ENCODE measurements at regions of chr20 and their contacts with region 1.

Region 1: GRCh38 chr20:11204926-11205768 is 531.3 kb upstream of the JAG1 start:
- DNase-seq: peak; percentile 66
- H3K4me3 Mint-ChIP-seq: no peak overlapping the region
- H3K27ac Mint-ChIP-seq: peak overlapping the region; percentile 45
- H3K4me1 Mint-ChIP-seq: peaks cover 28% of the 10 kb centered on the region
- H3K27me3 Mint-ChIP-seq: no peaks in the 10 kb centered on the region
- CTCF ChIP-seq: peak; percentile 40

Region 2: DNA sequence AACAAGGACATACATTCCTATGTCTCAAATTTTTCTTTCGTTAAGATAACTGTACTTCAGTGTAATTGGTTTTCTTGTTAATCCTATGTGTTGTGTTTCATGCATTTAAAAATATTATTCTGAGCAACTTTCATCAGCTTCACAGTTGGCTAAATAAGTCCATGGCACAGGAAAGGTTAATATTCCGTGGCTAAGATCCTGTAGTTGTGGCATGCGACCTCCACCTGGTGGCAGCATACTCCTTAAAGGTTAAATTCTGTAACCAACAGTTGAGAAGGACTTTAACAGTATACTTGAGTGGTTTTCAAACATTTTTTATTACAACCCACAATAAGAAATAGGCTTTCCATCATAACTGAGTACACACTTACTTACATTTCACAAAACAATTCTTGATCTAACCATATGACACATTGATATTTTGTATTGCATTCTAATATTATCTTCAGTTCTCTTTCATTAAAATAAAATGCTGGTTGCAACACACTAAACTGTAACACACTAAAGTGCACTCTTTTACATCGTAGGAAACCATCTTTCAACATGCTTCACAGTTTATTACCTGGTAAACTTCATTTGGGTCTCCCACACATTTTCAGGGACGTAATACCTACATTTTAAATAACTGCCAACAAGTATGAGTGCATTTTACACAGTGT is 651.7 kb before region 1 on chr20:
- CTCF ChIA-PET with region 1: interaction called, 4 read pairs
- intact Hi-C with region 1: loop called (anchors 2 kb)
- DNase-seq: peak; percentile 63
- H3K4me3 Mint-ChIP-seq: no peak overlapping the region
- H3K27ac Mint-ChIP-seq: no peak overlapping the region
- H3K4me1 Mint-ChIP-seq: peaks cover 46% of the 10 kb centered on the region
- H3K27me3 Mint-ChIP-seq: no peaks in the 10 kb centered on the region
- CTCF ChIP-seq: peak; percentile 40

Region 3: GRCh38 chr20:10708351-10709185 is 496.6 kb before region 1 on chr20:
- CTCF ChIA-PET with region 1: no interaction called
- intact Hi-C with region 1: loop called (anchors 5 kb)
- DNase-seq: no peak
- H3K4me3 Mint-ChIP-seq: peak overlapping the region; percentile 43
- H3K27ac Mint-ChIP-seq: peak overlapping the region; percentile 96
- H3K4me1 Mint-ChIP-seq: peaks cover 53% of the 10 kb centered on the region
- H3K27me3 Mint-ChIP-seq: no peaks in the 10 kb centered on the region
- CTCF ChIP-seq: no peak

Region 4: DNA sequence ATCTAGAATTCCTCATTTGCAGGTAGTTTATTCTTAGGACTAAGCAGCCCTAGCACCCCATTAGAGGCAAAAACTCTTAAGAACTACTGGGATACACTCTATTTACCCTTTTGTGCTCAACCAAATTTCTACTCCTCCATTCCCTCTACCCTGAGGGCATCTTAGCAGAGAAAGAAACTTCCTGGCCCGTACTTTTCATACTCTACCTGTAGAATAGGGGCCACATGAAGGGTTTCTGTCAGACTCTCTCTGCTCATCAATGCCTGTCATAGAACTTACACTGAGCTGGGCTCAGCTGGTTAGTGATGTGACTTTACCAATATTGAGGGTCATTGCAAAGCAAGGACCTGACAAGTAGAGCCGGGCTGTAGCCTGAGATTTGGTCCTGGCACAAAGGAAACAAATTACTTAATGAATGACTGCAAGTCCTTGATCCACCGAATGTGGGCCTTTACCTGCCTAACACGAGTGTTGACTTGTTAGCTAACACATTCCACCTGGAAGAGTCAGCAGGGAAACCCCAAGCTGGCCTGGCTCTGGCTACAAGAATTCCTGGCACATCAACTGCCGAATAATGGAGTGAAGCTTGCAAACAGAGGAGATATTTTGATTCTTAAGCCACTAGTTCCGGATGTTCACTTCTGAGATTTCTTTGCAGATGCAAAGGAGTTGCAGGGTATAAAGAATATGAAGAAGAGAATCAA is 250.9 kb before region 1 on chr20:
- CTCF ChIA-PET with region 1: no interaction called
- intact Hi-C with region 1: loop called (anchors 10 kb)
- DNase-seq: peak; percentile 53
- H3K4me3 Mint-ChIP-seq: no peak overlapping the region
- H3K27ac Mint-ChIP-seq: no peak overlapping the region
- H3K4me1 Mint-ChIP-seq: peaks cover 28% of the 10 kb centered on the region
- H3K27me3 Mint-ChIP-seq: no peaks in the 10 kb centered on the region
- CTCF ChIP-seq: no peak

Region 5: DNA sequence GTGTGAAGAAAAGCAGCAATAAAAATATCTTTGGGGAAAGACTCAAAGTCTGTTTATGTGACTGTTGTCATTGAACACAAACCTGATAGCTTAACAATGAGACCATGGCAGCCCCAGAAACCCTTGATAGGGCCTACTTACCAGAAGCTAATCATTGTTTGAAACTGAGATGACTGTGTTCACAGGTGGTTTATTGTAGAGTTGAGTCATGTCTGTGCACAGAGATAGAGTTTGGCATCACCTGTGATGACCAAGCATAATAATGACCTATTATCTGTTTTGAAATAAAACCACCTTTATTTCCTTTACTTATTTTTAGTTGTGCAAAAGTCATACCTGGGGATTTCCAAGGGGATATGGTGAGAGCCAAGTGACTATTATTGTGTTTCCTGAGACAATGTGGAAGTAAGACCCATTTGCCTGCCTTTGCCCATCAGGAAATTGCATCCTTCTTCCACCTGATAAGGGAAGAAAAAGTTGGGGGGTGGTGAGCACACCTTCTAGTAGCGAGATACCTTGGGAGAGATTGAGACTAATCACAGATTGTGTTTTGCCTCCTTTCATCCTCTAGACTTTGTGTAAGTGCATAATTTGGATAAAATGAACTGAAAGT is 74.5 kb before region 1 on chr20:
- CTCF ChIA-PET with region 1: no interaction called
- intact Hi-C with region 1: loop called (anchors 5 kb)
- DNase-seq: no peak
- H3K4me3 Mint-ChIP-seq: no peak overlapping the region
- H3K27ac Mint-ChIP-seq: peak overlapping the region; percentile 23
- H3K4me1 Mint-ChIP-seq: peaks cover 35% of the 10 kb centered on the region
- H3K27me3 Mint-ChIP-seq: no peaks in the 10 kb centered on the region
- CTCF ChIP-seq: no peak

Region 6: DNA sequence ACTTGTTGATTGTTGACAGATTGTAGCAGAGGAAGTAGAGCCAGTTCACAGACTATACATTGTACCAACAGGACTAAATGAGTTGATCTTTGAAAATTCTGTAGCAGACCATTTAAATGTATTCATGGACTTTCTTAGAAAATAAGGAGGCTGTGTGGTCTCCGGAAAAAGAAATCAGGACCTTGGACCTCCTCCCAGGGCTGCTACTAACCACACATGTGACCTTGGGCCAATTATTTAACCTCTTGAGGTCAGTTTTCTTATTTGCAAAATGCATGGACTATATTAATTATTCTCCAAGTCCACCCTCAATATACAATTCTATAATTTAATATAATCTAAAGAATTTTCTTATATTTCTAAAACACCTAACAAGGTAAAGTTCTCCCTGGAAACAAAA is 39.4 kb before region 1 on chr20:
- CTCF ChIA-PET with region 1: no interaction called
- intact Hi-C with region 1: no loop called
- DNase-seq: no peak
- H3K4me3 Mint-ChIP-seq: no peak overlapping the region
- H3K27ac Mint-ChIP-seq: no peak overlapping the region
- H3K4me1 Mint-ChIP-seq: peaks cover 42% of the 10 kb centered on the region
- H3K27me3 Mint-ChIP-seq: no peaks in the 10 kb centered on the region
- CTCF ChIP-seq: no peak

Region 7: GRCh38 chr20:11178946-11179654 is 26.0 kb before region 1 on chr20:
- CTCF ChIA-PET with region 1: interaction called, 3 read pairs
- intact Hi-C with region 1: loop called (anchors 2 kb)
- DNase-seq: peak; percentile 38
- H3K4me3 Mint-ChIP-seq: peak overlapping the region; percentile 13
- H3K27ac Mint-ChIP-seq: peak overlapping the region; percentile 93
- H3K4me1 Mint-ChIP-seq: peaks cover 17% of the 10 kb centered on the region
- H3K27me3 Mint-ChIP-seq: no peaks in the 10 kb centered on the region
- CTCF ChIP-seq: no peak

Region 8: DNA sequence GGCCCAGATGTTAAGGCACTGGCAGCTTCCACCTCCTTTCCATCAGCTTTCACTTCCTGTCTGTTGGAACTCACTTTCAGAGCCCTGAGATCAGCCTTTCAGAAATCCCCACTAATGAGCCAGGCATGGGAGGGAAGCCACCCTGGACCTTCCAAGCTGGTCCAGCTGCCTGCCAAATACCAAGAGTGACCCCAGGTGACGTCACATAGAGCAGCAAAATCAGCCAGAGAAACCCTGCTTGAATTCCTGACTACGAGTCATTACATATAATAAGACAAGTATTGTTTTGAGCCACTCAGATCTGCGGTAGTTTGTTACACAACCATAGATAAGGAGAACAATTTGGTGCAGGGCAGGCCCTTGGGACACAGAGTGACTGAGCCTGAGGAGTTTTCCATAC is 24.6 kb after region 1 on chr20:
- CTCF ChIA-PET with region 1: no interaction called
- intact Hi-C with region 1: no loop called
- DNase-seq: peak; percentile 77
- H3K4me3 Mint-ChIP-seq: peak overlapping the region; percentile 17
- H3K27ac Mint-ChIP-seq: peak overlapping the region; percentile 87
- H3K4me1 Mint-ChIP-seq: peaks cover 11% of the 10 kb centered on the region
- H3K27me3 Mint-ChIP-seq: no peaks in the 10 kb centered on the region
- CTCF ChIP-seq: no peak

Region 9: GRCh38 chr20:11267131-11267761 is 62.1 kb after region 1 on chr20:
- CTCF ChIA-PET with region 1: interaction called, 15 read pairs
- intact Hi-C with region 1: loop called (anchors 2 kb)
- DNase-seq: peak; percentile 52
- H3K4me3 Mint-ChIP-seq: peak overlapping the region; percentile 31
- H3K27ac Mint-ChIP-seq: peak overlapping the region; percentile 59
- H3K4me1 Mint-ChIP-seq: peaks cover 61% of the 10 kb centered on the region
- H3K27me3 Mint-ChIP-seq: no peaks in the 10 kb centered on the region
- CTCF ChIP-seq: no peak